OCI-LY7 (cell line): ENCODE measurements at regions of chr4 and their contacts with region 1.

Region 1: DNA sequence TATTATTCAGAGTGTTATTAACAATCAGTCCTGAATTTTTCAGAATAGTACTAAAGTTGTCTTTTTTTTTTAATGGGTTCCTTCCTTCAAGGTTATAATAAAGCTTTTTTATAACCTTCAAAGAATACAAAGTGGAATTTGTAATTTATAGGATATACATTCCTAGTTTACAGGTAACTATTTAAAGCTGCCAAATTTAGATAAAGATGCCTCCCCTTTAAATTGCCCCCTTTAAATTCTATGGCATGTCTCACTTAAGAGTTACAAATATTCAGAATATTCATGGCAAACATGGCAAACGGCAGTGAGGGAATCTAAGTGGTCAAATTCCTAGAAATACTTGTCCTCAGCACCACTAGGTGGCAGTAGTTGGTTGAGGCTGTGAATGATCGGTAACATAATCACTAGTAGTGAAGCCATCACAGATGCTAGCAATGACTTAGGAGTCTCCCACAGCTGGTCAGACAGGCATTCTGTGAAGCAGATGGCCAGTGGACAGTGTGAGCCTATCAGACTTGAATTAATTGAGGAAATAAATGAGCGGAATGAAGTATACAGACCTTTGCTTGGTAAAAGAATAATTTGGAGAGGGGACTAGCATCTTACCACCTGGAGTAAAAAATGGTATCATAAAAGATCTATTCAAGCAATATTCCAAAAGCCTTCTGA is 86.4 kb downstream of the CBR4 start:
- DNase-seq: peak; percentile 66
- H3K4me3 ChIP-seq: no peak overlapping the region
- H3K27ac ChIP-seq: no peak overlapping the region
- H3K4me1 ChIP-seq: no peaks in the 10 kb centered on the region
- CTCF ChIP-seq: peak; percentile 89

Region 2: DNA sequence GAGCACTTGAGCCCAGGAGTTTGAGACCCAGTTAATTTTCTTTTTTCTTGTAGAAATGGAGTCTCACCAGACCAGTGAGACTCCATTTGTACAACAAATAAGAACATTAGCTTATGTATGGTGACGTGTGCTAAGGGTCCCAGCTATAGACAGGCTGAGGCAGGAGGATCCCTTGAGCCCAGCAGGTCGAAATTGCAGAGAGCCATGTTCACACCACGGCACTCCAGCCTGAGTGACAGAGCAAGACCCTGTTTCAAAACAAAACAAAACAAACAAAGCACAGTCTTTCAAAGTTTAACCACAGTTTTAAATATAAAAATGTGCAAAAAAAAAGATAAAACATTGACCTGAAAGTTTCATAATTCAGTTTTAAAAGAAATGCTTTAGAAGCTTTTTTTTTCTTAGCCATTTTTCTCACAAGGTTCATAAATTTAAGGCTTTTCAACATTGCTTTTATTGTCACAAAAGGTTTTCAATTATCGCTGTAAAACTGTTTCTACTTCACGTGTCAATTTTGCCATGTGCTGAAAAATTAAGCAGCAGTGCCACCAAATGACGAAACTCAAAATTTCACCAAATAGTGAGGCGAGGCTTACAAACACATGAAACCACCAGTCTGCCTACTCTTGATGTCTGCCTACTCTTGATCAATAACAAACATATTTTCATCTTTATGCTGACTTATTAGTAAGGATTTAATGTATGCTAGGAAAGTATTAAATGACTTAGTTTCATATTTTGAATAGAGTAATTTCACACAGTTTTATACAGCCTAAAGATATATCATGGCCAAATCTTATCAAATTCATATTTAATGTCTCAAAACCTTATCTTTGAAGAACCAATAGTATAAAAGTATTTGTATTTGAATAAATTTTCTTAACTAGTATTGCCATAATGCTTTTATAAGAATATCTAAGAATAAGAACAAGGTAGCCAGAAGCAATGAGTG is 562.4 kb after region 1 on chr4:
- CTCF ChIA-PET with region 1: no interaction called
- POLR2A ChIA-PET with region 1: no interaction called
- intact Hi-C with region 1: loop called (anchors 5 kb)
- DNase-seq: peak; percentile 33
- H3K4me3 ChIP-seq: no peak overlapping the region
- H3K27ac ChIP-seq: no peak overlapping the region
- H3K4me1 ChIP-seq: no peaks in the 10 kb centered on the region
- CTCF ChIP-seq: peak; percentile 80

Region 3: DNA sequence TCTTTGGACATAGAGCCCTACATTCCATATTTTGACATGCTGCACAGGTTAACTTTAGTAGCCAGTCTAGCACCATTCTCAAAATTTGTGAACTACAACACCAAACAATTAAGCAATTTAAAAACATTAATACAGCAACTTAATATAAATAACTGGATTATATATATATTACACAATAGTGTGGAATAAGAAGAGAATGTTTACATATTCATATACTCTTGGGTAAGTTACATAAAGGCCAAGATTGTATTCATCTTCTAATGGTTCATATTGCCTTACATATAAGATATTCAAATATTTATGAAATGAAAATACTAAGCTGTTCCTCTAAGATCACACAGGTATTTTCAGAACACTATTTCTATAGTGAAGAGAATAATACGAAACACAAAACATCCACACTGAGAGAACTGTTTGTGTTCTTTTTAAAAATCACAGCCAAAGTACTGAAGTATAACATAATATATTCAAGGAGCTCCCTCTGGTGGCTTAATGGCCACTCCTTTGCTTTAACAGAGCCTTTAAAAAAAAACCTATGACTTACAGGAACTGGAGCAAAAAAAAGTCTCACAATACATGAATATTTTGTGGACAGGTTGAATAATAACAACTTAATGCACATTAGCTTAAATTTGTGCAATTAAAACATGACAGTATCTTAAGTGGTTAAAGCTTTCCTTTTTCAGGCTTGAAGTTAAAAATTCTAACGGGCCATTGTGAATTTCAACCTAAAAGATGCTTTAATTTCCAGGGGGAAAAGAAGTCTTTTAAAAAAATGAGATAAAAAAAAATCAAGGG is 642.6 kb after region 1 on chr4:
- CTCF ChIA-PET with region 1: no interaction called
- POLR2A ChIA-PET with region 1: no interaction called
- intact Hi-C with region 1: loop called (anchors 5 kb)
- DNase-seq: peak; percentile 60
- H3K4me3 ChIP-seq: no peak overlapping the region
- H3K27ac ChIP-seq: no peak overlapping the region
- H3K4me1 ChIP-seq: no peaks in the 10 kb centered on the region
- CTCF ChIP-seq: peak; percentile 94